GM10248 (cell line): ENCODE measurements at regions of chr3 and their contacts with region 1.

Region 1: DNA sequence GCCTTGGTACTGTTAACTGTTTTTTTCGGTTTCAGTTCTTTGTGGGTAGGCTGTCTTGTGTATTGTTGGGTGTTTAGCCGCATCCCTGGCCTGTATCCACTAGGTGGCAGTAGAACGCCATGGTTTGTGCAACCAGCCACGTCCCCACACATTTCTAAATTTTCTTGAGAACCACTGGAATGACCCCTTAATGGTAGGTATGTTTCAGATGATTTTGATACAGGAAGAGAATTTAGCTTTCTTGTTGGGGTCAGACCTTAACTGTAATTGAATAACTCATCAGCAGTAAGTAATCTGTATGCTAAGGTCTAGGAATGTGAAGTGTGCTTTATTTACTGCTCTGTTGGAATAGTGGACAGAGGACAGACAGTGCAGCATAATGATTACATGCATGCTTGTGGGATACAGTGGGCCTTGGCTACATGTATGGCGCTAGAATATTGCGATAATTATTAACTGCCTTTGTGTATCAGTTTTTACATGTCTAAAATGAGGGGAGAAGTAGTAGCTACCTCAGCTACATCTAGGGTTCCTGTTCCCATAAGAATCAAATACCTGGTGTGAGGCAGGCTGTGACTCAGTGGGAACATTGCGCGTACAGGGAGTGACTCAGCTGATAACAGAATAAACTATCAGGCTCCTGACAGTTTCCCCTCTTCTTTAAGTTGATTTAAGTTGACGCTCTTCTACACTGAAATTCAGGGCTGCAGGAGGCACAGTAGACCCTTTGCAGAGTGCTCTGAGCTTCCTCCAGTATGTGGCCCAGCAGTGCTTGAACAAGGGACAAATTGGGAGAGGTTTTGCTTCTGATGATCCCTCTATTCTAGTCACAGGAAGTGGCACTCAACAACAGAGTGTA is 25.0 kb upstream of the GPR171 start:
- DNase-seq: peak; percentile 73
- CTCF ChIP-seq: peak; percentile 91

Region 2: DNA sequence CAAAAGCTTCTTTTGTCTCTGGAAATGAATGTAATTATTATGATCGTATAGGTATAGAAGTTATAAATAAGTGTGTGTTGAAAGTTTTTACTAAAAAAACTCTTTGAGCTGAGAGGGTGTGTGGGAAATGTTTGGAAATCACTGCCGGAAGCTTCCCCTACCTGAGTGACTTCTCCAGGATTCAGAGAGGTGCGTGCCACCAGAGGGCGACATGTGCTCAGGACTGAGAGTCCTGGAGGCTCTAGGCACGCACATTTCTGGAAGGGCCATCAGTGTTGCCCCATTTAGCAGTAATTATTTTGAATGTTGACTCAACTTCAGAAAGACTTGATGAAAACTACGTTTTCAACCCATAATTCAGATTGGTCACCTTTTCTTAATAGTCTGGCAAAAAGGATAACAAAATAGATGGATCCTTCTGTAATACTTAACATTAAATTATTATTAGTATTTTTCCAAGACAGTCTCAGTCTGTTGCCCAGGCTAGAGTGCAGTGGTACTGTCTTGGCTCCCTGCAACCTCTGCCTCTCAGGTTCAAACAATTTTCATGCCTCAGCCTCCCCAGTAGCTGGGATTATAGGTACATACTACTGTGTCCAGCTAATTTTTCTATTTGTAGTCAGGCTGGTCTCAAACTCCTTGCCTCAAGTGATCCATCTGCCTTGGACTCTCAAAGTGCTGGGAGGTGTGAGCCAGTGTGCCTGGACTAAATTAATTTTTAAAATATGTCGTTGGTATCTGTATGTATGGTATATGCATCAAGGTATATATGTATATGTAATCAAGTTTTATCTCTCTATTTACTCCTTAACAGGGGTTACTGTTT is 59.6 kb before region 1 on chr3:
- CTCF ChIA-PET with region 1: interaction called, 14 read pairs
- POLR2A ChIA-PET with region 1: no interaction called
- DNase-seq: peak; percentile 70
- CTCF ChIP-seq: peak; percentile 92

Region 3: DNA sequence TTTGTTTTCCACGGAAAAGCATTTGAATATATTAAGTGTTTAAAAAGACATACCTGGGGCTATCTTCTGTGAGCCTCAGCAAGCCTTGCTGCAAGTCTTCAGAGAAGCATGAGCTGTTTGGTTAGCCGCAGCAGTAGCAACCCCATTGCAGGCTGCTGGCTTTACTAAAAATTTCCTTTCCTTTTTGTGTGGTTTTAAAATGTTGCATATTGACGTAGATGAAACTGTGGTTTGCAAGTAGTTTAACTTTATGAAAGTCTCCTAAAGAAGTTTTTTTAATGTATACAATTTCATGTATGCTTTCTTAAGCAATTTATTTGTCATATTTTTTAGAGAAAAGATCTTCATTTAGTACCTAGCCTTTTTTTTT is 25.0 kb before region 1 on chr3 and contains the start of gene GPR171:
- CTCF ChIA-PET with region 1: interaction called, 29 read pairs
- POLR2A ChIA-PET with region 1: no interaction called
- DNase-seq: peak; percentile 38
- CTCF ChIP-seq: no peak

Region 4: DNA sequence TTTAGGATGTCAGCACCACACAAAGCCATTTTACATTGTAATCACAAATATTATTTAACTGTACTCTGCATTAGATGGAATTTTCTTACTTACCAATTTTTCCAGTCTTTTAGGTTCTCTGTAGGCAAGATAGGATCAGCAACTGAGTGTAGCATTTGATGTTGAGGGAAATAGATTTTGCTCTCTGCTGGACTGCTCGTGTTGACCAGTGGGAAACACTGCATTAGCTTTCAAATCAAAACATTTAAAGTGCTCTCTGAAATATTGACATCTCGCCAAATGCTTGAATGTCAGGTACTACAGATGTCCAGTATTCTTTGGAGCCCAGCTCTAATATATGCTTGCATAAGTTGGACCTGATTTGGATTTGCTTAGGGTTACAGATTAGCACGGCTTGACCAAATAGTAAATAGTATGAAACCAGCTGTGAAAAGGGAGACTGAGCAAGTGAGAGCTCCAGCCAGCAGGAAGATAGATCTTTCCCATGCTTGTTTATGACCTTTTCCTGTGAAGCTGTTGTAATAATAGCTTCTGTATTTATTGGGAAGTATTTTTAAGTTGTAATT is 20.8 kb after region 1 on chr3:
- CTCF ChIA-PET with region 1: interaction called, 23 read pairs
- POLR2A ChIA-PET with region 1: no interaction called
- DNase-seq: no peak
- CTCF ChIP-seq: no peak

Region 5: DNA sequence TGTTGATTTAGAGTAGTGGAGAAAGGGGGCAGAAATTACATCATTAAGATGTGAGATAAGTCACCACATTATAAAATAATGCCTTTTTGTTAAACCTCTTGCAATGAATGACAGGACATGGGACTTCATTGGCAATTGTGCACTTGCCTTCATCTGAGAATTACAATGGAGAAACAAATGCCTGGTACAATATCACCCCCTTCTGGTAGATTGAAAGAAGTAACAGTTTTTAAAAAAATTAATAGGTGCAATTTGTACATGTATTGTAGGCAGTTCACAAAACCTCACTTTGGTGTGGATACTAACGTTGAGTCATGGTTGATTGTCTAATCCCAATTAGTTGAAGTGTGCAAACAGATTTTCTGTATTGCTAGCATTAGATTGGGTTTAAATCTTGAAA is 54.9 kb after region 1 on chr3:
- CTCF ChIA-PET with region 1: interaction called, 120 read pairs
- POLR2A ChIA-PET with region 1: no interaction called
- DNase-seq: peak; percentile 50
- CTCF ChIP-seq: peak; percentile 50

Region 6: DNA sequence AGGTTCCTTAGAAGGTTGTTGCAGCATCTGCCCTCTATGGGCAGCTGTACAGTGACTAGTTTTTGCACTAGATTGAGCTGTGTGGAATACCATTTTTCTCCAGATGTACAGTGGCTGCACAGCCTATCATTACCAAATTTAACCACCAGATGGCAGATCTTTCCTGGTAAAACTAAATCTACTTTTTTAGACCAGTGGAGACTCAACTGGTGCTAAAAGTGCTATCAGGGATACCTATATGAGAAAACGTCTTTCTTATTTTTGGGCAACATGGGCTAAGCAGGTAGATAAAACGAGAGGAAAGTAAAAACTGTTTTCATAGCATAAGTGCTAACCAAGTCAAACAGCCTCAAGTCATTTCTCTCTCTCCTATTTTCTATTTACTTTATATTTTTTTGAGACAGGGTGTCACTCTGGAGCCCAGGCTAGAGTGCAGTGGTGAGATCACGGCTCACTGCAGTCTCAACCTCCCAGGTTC is 211.7 kb after region 1 on chr3:
- CTCF ChIA-PET with region 1: no interaction called
- POLR2A ChIA-PET with region 1: no interaction called
- DNase-seq: peak; percentile 41
- CTCF ChIP-seq: peak; percentile 67